PC-3 (cell line): ENCODE measurements at regions of chr2 and their contacts with region 1.

Region 1: DNA sequence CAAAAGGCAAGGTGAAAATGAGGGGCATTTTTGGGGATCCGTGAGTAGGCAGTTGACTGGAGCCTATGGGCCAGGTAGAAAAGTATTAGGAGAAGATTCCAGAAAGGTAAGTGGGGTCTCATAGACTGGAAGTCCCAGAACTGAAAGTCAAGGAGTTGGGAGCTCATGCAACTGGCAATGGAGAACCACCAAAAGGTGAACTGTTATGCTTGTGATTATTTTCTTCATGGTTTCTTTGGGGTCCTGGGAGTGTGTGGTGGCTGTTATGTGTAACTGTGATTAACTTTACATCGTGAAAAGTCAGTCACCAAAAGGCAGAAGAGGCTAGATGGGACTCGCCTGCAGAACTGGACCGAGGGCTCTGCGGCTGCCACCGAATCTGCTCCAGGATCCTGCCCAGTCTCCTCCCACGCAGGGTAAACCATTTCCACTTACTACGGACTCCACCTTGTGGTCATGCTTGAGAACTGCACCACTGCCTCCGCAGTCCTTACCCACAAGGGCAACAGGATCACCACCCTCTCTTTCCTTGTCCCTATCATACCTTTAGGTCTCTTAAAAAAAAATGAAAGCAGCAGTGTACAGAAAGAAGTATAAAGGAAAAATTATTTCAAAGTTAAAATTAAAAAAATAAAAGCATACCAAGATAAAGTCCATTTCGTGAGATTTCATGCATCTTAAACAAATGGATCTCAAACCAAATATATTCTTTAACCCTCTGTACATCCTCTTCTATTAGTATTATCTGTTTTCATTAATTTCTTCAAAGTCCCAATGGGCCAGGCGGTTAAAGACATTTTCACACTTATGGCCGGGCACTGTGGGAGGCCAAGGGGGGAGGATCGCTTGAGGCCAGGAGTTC is 15.6 kb upstream of the CEP68 start:
- DNase-seq: peak; percentile 90
- ATAC-seq: peak; percentile 100
- H3K4me3 ChIP-seq: peak overlapping the region; percentile 11; the same call in 1 of the 2 replicates
- H3K27ac ChIP-seq: no peak overlapping the region
- H3K4me1 ChIP-seq: no peaks in the 10 kb centered on the region
- H3K27me3 ChIP-seq: no peaks in the 10 kb centered on the region
- CTCF ChIP-seq: peak; percentile 92

Region 2: DNA sequence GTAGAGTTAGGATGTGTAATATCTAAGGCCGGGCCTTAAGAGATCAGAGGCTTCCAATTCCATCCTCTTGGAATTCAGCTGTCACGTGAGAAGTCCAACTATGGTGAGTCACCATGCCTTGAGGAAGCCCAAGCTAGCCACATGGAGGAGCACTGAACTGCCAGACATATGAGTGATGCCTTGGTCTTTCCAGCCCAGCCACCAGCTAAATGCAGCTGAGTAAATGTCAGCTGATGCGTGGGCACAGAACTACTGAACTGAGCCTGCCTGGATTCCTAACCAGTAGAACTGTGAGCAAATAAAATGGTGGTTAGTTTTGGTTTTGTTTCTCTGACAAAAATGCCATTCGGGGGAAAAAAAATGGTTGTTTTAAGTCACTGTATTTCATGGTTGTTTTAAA is 233.2 kb before region 1 on chr2:
- CTCF ChIA-PET with region 1: no interaction called
- POLR2A ChIA-PET with region 1: no interaction called
- intact Hi-C with region 1: no loop called
- DNase-seq: peak; percentile 96
- ATAC-seq: peak; percentile 94
- H3K4me3 ChIP-seq: no peak overlapping the region
- H3K27ac ChIP-seq: peak overlapping the region; percentile 46
- H3K4me1 ChIP-seq: peaks cover 11% of the 10 kb centered on the region
- H3K27me3 ChIP-seq: no peaks in the 10 kb centered on the region
- CTCF ChIP-seq: peak; percentile 32; the same call in 1 of the 2 replicates

Region 3: DNA sequence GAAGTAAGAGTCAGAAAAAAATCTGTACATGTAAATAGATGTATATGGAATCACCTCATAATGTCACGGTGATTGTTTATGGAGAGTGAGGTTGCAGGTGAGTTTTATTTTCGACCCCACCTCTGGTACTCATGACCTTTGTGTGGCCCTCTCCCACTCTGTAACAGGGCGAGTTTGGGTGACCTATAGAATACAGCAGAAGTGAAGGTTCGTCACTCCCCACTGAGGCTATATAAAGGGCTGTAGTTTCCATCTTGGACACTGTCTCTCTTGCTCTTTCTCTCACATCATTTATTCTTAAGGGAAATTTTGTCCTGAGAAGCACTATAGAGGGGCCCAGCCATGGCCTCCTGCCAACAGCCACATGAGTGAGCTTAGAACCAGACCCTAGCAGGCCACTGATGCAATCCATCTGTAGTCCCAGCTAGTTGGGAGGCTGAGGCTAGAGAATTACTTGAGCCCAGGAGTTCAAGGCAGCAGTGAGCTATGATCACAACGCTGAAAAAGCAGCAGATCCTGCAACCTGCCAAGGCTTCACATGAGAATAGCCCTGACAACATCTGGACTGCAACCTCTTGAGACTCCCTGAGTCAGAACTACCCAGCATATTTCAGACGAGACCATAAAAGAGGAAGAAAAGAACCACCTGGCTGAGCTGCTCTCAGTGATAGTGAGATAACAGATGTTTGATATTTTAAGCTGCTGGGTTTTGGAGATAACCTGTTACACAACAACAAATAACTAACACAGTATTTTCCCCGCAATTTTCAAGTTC is 125.7 kb before region 1 on chr2:
- CTCF ChIA-PET with region 1: interaction called, 10 read pairs
- POLR2A ChIA-PET with region 1: no interaction called
- intact Hi-C with region 1: loop called (anchors 1 kb)
- DNase-seq: no peak
- ATAC-seq: no peak
- H3K4me3 ChIP-seq: no peak overlapping the region
- H3K27ac ChIP-seq: no peak overlapping the region
- H3K4me1 ChIP-seq: no peaks in the 10 kb centered on the region; the same call in 1 of the 2 replicates
- H3K27me3 ChIP-seq: no peaks in the 10 kb centered on the region
- CTCF ChIP-seq: no peak

Region 4: GRCh38 chr2:64995041-64995440 is 45.6 kb before region 1 on chr2:
- CTCF ChIA-PET with region 1: no interaction called
- POLR2A ChIA-PET with region 1: no interaction called
- intact Hi-C with region 1: loop called (anchors 2 kb)
- DNase-seq: no peak
- ATAC-seq: no peak
- H3K4me3 ChIP-seq: no peak overlapping the region
- H3K27ac ChIP-seq: no peak overlapping the region
- H3K4me1 ChIP-seq: peaks cover 6% of the 10 kb centered on the region; the same call in 1 of the 2 replicates
- H3K27me3 ChIP-seq: no peaks in the 10 kb centered on the region
- CTCF ChIP-seq: no peak

Region 5: GRCh38 chr2:65017335-65017734 is 23.3 kb before region 1 on chr2:
- CTCF ChIA-PET with region 1: no interaction called
- POLR2A ChIA-PET with region 1: no interaction called
- intact Hi-C with region 1: no loop called
- DNase-seq: peak; percentile 28
- ATAC-seq: peak; percentile 45; the same call in 1 of the 2 replicates
- H3K4me3 ChIP-seq: no peak overlapping the region
- H3K27ac ChIP-seq: no peak overlapping the region
- H3K4me1 ChIP-seq: no peaks in the 10 kb centered on the region
- H3K27me3 ChIP-seq: no peaks in the 10 kb centered on the region
- CTCF ChIP-seq: peak; percentile 43; the same call in 1 of the 2 replicates